Posterior vena cava (tissue), 2 donors: ENCODE measurements at regions of chr9 and their contacts with region 1.

Region 1: GRCh38 chr9:4228606-4229005 is 71.3 kb downstream of the GLIS3 start:
- DNase-seq: no peak

Region 2: DNA sequence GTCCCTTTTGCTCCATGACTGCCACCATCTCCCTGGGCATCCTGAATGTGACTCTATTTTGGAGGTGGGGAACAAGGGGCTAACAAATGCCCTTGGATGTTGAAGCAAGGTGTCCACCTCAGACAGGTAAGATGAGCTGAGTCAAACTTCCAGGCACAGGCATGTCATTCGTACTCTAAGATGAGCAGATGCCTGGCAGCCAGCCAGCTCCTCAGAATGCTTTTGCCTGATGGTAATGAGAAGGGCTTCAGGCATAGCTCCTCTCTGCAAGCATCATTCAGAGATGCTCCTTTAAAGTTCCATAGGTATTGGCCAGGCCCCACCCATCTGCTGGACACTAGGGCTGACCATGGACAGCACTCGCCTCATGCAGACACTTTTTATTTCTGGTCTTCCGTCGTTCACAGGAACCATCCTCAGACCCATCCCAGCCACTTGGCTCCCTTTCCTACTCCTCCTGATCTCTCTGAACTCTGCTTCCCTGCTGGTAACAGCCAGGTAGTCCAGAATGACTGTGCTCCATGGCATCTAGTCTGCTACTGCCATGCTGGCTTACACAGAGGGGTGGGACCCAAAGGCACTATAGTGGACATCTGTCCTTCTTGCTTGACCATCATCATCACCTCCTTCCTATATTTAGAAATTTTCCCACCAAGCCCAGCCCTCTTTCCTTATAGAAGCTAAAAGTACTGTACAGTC is 47.5 kb before region 1 on chr9:
- intact Hi-C with region 1: no loop called
- DNase-seq: no peak

Region 3: DNA sequence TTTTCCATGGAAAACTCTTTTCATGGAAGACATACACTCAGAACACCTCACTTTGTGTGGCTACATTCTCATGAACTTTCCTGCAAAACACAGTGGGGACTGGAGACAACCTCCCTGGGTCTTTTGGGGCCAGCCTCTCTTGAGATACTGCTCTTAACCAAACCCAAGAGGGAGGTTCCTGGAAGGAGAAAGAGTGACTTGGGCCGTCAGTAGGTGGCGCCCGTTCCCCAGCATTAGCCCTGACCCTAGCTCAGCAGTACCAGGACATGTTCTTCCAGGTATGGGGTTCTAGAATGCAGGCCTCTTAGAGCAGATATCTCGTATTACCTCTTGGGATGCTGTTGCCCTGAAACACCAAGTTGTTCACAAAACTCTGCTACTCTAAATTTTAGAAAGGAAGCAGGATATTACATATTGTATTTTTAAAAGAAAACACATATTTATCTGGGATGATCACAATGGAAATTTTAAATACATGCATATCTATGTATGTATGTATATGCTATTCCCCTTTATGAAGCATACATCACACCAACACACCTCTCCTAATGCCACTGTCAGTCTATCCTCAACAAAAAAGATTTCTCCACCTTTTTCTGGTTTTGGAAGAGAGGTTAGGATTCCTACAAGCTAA is 87.1 kb after region 1 on chr9:
- intact Hi-C with region 1: no loop called
- DNase-seq: peak; percentile 93

Region 4: GRCh38 chr9:5536684-5537083 is 1308.1 kb after region 1 on chr9:
- intact Hi-C with region 1: loop called in 1 of 2 experiments (anchors 5 kb)
- DNase-seq: no peak